SK-N-SH (cell line): ENCODE measurements at regions of chr15 and their contacts with region 1.

Region 1: DNA sequence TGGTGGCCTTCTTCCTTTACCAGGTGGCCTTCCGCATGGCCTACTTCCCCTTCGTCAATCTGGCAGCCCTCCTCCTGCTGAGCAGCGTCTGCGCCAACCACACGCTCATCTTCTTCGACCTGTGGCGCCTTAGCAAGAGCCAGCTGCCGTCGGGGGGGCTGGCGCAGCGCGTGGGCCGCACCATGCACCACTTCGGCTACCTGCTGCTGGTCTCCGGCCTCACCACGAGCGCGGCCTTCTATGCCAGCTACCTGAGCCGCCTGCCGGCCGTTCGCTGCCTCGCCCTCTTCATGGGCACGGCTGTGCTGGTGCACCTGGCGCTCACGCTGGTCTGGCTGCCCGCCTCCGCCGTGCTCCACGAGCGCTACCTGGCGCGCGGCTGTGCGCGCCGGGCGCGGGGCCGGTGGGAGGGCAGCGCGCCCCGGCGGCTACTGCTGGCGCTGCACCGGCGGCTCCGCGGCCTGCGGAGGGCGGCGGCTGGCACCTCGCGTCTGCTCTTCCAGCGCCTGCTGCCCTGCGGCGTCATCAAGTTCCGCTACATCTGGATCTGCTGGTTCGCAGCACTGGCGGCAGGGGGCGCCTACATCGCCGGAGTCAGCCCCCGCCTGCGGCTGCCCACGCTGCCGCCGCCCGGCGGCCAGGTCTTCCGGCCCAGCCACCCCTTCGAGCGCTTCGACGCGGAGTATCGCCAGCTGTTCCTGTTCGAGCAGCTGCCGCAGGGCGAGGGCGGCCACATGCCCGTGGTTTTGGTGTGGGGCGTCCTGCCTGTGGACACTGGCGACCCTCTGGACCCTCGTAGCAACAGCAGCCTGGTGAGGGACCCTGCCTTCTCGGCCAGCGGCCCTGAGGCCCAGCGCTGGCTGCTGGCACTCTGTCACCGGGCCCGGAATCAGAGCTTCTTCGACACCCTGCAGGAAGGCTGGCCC is 9.9 kb downstream of the DISP2 start:
- DNase-seq: peak; percentile 88
- H3K4me3 ChIP-seq: no peak overlapping the region; a peak in 1 of 4 replicates
- H3K27ac ChIP-seq: no peak overlapping the region; a peak in 1 of 4 replicates
- H3K4me1 ChIP-seq: peaks cover 0 to 17% of the 10 kb centered on the region in 2 experiments; a peak in 1 of 4 replicates
- H3K27me3 ChIP-seq: no peaks in the 10 kb centered on the region
- CTCF ChIP-seq: peak; percentile 52
- EP300 ChIP-seq: peak in 1 of 2 experiments; percentile 15; a peak in 1 of 4 replicates
- RAD21 ChIP-seq: peak; percentile 29

Region 2: DNA sequence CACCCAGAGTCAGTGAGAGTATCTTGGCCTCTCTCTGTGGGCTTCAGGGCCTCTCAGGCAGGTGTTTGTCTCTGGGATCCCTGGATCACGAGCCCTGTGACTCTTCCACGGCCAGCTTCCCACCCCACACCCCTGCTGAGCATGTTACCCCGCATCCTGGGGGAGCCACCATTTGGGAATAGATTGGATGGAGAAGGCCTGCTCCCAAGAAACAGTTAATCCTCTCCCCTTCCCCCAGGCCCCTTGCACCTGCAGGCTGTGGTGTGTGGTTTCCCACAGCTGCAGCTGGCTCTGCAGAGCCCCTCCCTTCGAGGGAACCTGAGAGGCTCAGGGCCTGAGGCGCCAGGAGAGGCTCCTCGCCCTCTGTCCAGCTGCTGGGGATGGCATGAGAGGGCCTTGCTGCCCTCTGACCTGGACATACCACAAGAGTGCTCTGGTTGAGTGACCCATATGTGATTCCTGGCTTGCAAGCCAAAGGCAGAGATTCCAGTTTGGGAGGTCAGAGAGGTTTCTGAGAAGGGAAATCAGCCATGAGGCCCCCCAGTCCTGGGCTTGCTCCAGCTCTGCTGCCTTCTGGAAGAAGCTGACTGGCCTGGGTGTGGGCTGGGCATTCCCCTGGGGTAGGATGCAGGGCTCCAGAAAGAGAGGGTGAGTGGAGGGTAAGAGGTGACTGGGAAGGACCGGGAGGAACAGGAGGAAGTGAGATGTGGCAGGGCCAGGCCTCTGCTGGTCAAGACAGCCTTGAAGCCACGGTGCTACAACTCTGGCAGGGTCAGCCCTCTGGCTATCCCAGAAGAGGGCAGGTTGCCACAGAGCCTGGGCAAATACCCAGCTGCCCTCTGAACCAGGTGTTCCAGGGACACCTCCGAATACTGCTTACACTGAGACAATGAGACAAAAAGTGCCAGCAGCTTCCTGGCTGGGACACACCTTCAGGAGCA is 313.1 kb before region 1 on chr15:
- CTCF ChIA-PET with region 1: no interaction called
- POLR2A ChIA-PET with region 1: no interaction called
- DNase-seq: no peak
- H3K4me3 ChIP-seq: no peak overlapping the region
- H3K27ac ChIP-seq: peak overlapping the region in 1 of 2 experiments; percentile 76; a peak in 2 of 4 replicates
- H3K4me1 ChIP-seq: peaks cover 0 to 25% of the 10 kb centered on the region in 2 experiments; a peak in 1 of 4 replicates
- H3K27me3 ChIP-seq: no peaks in the 10 kb centered on the region
- CTCF ChIP-seq: no peak
- EP300 ChIP-seq: no peak
- RAD21 ChIP-seq: no peak

Region 3: DNA sequence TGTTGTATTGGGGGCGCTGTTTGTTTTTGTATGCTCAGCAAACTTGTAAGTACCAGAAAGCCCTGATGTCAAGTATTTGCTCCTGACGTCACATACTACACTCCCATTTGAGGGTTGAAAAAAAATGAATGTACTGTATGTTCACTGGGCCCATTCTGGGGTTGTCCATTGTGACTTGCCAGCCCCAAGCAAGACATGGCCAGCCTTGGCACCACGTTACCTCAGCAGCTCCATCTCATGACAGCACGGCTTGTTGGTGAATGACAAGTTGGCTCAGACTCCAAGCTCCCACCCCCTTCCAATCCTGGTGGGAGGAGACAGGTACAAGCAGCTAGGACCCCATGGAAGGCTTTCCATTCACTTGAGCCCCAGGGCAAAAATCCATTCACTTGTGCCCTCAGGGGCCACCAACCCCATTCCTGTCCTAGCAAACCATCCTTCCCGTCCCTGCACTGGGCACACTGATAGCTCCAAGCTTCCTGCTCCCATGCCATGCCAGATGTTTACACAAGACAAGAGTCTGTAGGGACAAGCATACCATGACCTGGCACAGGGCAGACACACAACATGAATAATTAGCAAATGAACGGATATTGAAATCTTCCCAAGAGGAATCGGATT is 15.6 kb before region 1 on chr15:
- CTCF ChIA-PET with region 1: interaction called, 2,194 read pairs
- POLR2A ChIA-PET with region 1: interaction called, 3 read pairs
- DNase-seq: no peak
- H3K4me3 ChIP-seq: no peak overlapping the region
- H3K27ac ChIP-seq: no peak overlapping the region
- H3K4me1 ChIP-seq: peaks cover 0 to 20% of the 10 kb centered on the region in 2 experiments; a peak in 2 of 4 replicates
- H3K27me3 ChIP-seq: no peaks in the 10 kb centered on the region
- CTCF ChIP-seq: no peak
- EP300 ChIP-seq: no peak
- RAD21 ChIP-seq: no peak

Region 4: GRCh38 chr15:40357723-40358470 is 10.1 kb before region 1 on chr15 and contains the start of gene DISP2:
- CTCF ChIA-PET with region 1: interaction called, 27 read pairs
- POLR2A ChIA-PET with region 1: interaction called, 3 read pairs
- DNase-seq: peak; percentile 100
- H3K4me3 ChIP-seq: peak within 1 kb of the TSS; percentile 59
- H3K27ac ChIP-seq: peak within 1 kb of the TSS in 1 of 2 experiments; percentile 92; a peak in 2 of 4 replicates
- H3K4me1 ChIP-seq: peaks cover 0 to 36% of the 10 kb centered on the region in 2 experiments; a peak in 2 of 4 replicates
- H3K27me3 ChIP-seq: 0 out of 2 replicates have a peak, but pooled peaks cover 11% of the 10 kb centered on the region
- CTCF ChIP-seq: no peak
- EP300 ChIP-seq: no peak; a peak in 1 of 4 replicates
- RAD21 ChIP-seq: no peak
- polyA plus RNA-seq, gene DISP2: 0.08 and 0.12 TPM in 2 replicates

Region 5: DNA sequence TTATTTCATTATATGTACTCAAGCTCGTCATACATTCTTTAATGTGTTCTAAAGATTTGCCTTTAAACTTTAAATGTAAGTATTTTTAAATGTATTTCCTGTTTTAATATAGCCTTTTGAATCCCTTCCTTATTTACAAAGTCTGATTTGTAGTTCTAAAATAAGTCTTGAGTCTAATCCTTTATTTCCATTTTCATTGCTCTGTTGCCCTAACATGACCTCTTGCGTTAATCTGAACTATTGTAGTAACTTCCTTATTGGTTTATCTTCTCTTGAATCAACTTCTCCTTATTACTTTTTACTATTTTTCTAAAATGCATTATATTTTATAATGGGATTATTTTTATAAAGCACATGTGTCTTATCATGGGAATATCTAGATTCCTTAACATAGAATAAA is 250.1 kb after region 1 on chr15:
- CTCF ChIA-PET with region 1: no interaction called
- POLR2A ChIA-PET with region 1: no interaction called
- DNase-seq: no peak
- H3K4me3 ChIP-seq: no peak overlapping the region
- H3K27ac ChIP-seq: no peak overlapping the region
- H3K4me1 ChIP-seq: peaks cover 0 to 3% of the 10 kb centered on the region in 2 experiments; a peak in 1 of 4 replicates
- H3K27me3 ChIP-seq: no peaks in the 10 kb centered on the region
- CTCF ChIP-seq: no peak
- EP300 ChIP-seq: no peak
- RAD21 ChIP-seq: no peak